T-cell (primary cell): ENCODE measurements at regions of chr7 and their contacts with region 1.

Region 1: GRCh38 chr7:98119256-98119918 is 12.7 kb downstream of the LMTK2 start:
- DNase-seq: no peak
- ATAC-seq: no peak
- H3K4me3 ChIP-seq: no peak overlapping the region
- H3K4me3 Mint-ChIP-seq: no peak overlapping the region
- H3K27ac ChIP-seq: no peak overlapping the region
- H3K27ac Mint-ChIP-seq: no peak overlapping the region
- H3K4me1 ChIP-seq: no peaks in the 10 kb centered on the region
- H3K4me1 Mint-ChIP-seq: peaks cover 31 to 57% (median 45%) of the 10 kb centered on the region in 3 donors
- H3K27me3 ChIP-seq: no peaks in the 10 kb centered on the region
- H3K27me3 Mint-ChIP-seq: no peaks in the 10 kb centered on the region

Region 2: GRCh38 chr7:97971990-97972943 is 147.1 kb before region 1 on chr7:
- CTCF ChIA-PET with region 1: no interaction called
- POLR2A ChIA-PET with region 1: no interaction called
- DNase-seq: peak; percentile 68 to 89 (median 82)
- ATAC-seq: peak; percentile 94 to 97 (median 96)
- H3K4me3 ChIP-seq: peak overlapping the region; percentile 79 to 83
- H3K4me3 Mint-ChIP-seq: peak overlapping the region; percentile 86 to 96 (median 87)
- H3K27ac ChIP-seq: peak overlapping the region; percentile 66
- H3K27ac Mint-ChIP-seq: peak overlapping the region; percentile 95 to 96
- H3K4me1 ChIP-seq: peaks cover 9 to 17% of the 10 kb centered on the region in 2 experiments
- H3K4me1 Mint-ChIP-seq: peaks cover 14 to 27% (median 23%) of the 10 kb centered on the region in 3 donors
- H3K27me3 ChIP-seq: no peaks in the 10 kb centered on the region
- H3K27me3 Mint-ChIP-seq: peaks cover 0 to 4% of the 10 kb centered on the region in 2 donors

Region 3: GRCh38 chr7:98837630-98837972 is 718.2 kb after region 1 on chr7:
- CTCF ChIA-PET with region 1: no interaction called
- POLR2A ChIA-PET with region 1: interaction called in 1 of 2 experiments, 12 read pairs
- DNase-seq: no peak
- ATAC-seq: no peak
- H3K4me3 ChIP-seq: no peak overlapping the region
- H3K4me3 Mint-ChIP-seq: no peak overlapping the region
- H3K27ac ChIP-seq: no peak overlapping the region
- H3K27ac Mint-ChIP-seq: no peak overlapping the region
- H3K4me1 ChIP-seq: peaks cover 0 to 2% of the 10 kb centered on the region in 2 experiments
- H3K4me1 Mint-ChIP-seq: no peaks in the 10 kb centered on the region
- H3K27me3 ChIP-seq: peaks cover 0 to 40% of the 10 kb centered on the region in 2 experiments
- H3K27me3 Mint-ChIP-seq: peaks cover 8 to 17% of the 10 kb centered on the region in 2 donors